Naive thymus-derived CD4-positive, alpha-beta T cell (primary cell): ENCODE measurements at regions of chr11 and their contacts with region 1.

Region 1: GRCh38 chr11:18634140-18635032 is at the start of gene SPTY2D1:
- DNase-seq: peak; percentile 88 to 99 (median 98)
- ATAC-seq: peak; percentile 97
- H3K4me3 ChIP-seq: peak within 1 kb of the TSS; percentile 98
- H3K4me3 Mint-ChIP-seq: peak within 1 kb of the TSS; percentile 83 to 99 (median 96)
- H3K27ac ChIP-seq: peak within 1 kb of the TSS; percentile 98
- H3K27ac Mint-ChIP-seq: peak within 1 kb of the TSS; percentile 95 to 100 (median 98)
- H3K4me1 ChIP-seq: peaks cover 10 to 17% of the 10 kb centered on the region in 2 donors
- H3K4me1 Mint-ChIP-seq: peaks cover 6 to 58% (median 32%) of the 10 kb centered on the region in 7 donors
- H3K27me3 ChIP-seq: no peaks in the 10 kb centered on the region
- H3K27me3 Mint-ChIP-seq: peaks cover 0 to 7% (median 0%) of the 10 kb centered on the region in 5 donors
- total RNA-seq, gene SPTY2D1: 26.0 to 37.4 (median 28.2) TPM

Region 2: GRCh38 chr11:17185938-17186337 is 1448.4 kb before region 1 on chr11:
- CTCF ChIA-PET with region 1: no interaction called
- POLR2A ChIA-PET with region 1: no interaction called
- intact Hi-C with region 1: no loop called
- DNase-seq: no peak
- ATAC-seq: no peak
- H3K4me3 ChIP-seq: no peak overlapping the region
- H3K4me3 Mint-ChIP-seq: no peak overlapping the region
- H3K27ac ChIP-seq: no peak overlapping the region
- H3K27ac Mint-ChIP-seq: no peak overlapping the region
- H3K4me1 ChIP-seq: no peaks in the 10 kb centered on the region
- H3K4me1 Mint-ChIP-seq: peaks cover 2 to 30% (median 19%) of the 10 kb centered on the region in 7 donors
- H3K27me3 ChIP-seq: no peaks in the 10 kb centered on the region
- H3K27me3 Mint-ChIP-seq: no peaks in the 10 kb centered on the region

Region 3: GRCh38 chr11:18105802-18106574 is 528.4 kb before region 1 on chr11 and contains the start of gene SAAL1:
- CTCF ChIA-PET with region 1: no interaction called
- POLR2A ChIA-PET with region 1: no interaction called
- intact Hi-C with region 1: loop called (anchors 1 to 2 kb)
- DNase-seq: peak; percentile 80 to 95 (median 84)
- ATAC-seq: peak; percentile 99
- H3K4me3 ChIP-seq: peak within 1 kb of the TSS; percentile 93
- H3K4me3 Mint-ChIP-seq: peak within 1 kb of the TSS; percentile 84 to 95 (median 93)
- H3K27ac ChIP-seq: peak within 1 kb of the TSS; percentile 78
- H3K27ac Mint-ChIP-seq: peak within 1 kb of the TSS; percentile 77 to 93 (median 90)
- H3K4me1 ChIP-seq: peaks cover 14 to 15% of the 10 kb centered on the region in 2 donors
- H3K4me1 Mint-ChIP-seq: peaks cover 21 to 54% (median 42%) of the 10 kb centered on the region in 7 donors
- H3K27me3 ChIP-seq: no peaks in the 10 kb centered on the region
- H3K27me3 Mint-ChIP-seq: peaks cover 0 to 15% (median 0%) of the 10 kb centered on the region in 5 donors
- total RNA-seq, gene SAAL1: 16.0 to 25.3 (median 19.3) TPM

Region 4: GRCh38 chr11:18427240-18427639 is 207.1 kb before region 1 on chr11:
- CTCF ChIA-PET with region 1: no interaction called
- POLR2A ChIA-PET with region 1: no interaction called
- intact Hi-C with region 1: no loop called
- DNase-seq: no peak
- ATAC-seq: no peak
- H3K4me3 ChIP-seq: no peak overlapping the region
- H3K4me3 Mint-ChIP-seq: no peak overlapping the region
- H3K27ac ChIP-seq: no peak overlapping the region
- H3K27ac Mint-ChIP-seq: no peak overlapping the region
- H3K4me1 ChIP-seq: no peaks in the 10 kb centered on the region
- H3K4me1 Mint-ChIP-seq: peaks cover 3 to 7% (median 5%) of the 10 kb centered on the region in 7 donors
- H3K27me3 ChIP-seq: no peaks in the 10 kb centered on the region
- H3K27me3 Mint-ChIP-seq: peaks cover 0 to 2% (median 0%) of the 10 kb centered on the region in 5 donors

Region 5: GRCh38 chr11:18526521-18527296 is 107.7 kb before region 1 on chr11 and contains the start of gene TSG101:
- CTCF ChIA-PET with region 1: no interaction called
- POLR2A ChIA-PET with region 1: interaction called, 24 read pairs
- intact Hi-C with region 1: loop called (anchors 1 kb)
- DNase-seq: peak; percentile 86 to 96 (median 91)
- ATAC-seq: peak; percentile 91
- H3K4me3 ChIP-seq: peak within 1 kb of the TSS; percentile 94
- H3K4me3 Mint-ChIP-seq: peak within 1 kb of the TSS; percentile 93 to 100 (median 100)
- H3K27ac ChIP-seq: peak within 1 kb of the TSS; percentile 96
- H3K27ac Mint-ChIP-seq: peak within 1 kb of the TSS; percentile 99 to 100 (median 100)
- H3K4me1 ChIP-seq: peaks cover 18% of the 10 kb centered on the region in 2 donors
- H3K4me1 Mint-ChIP-seq: peaks cover 28 to 67% (median 55%) of the 10 kb centered on the region in 7 donors
- H3K27me3 ChIP-seq: no peaks in the 10 kb centered on the region
- H3K27me3 Mint-ChIP-seq: peaks cover 0 to 3% (median 0%) of the 10 kb centered on the region in 5 donors
- total RNA-seq, gene TSG101: 16.8 to 46.3 (median 36.3) TPM

Region 6: GRCh38 chr11:18615628-18616392 is 18.6 kb before region 1 on chr11:
- CTCF ChIA-PET with region 1: interaction called, 3 read pairs
- POLR2A ChIA-PET with region 1: interaction called, 16 read pairs
- intact Hi-C with region 1: loop called (anchors 1 kb)
- DNase-seq: no peak
- ATAC-seq: peak; percentile 44
- H3K4me3 ChIP-seq: no peak overlapping the region
- H3K4me3 Mint-ChIP-seq: peak overlapping the region in 1 of 10 donors; percentile 71
- H3K27ac ChIP-seq: no peak overlapping the region
- H3K27ac Mint-ChIP-seq: peak overlapping the region in 3 of 9 donors; percentile 26 to 72 (median 28)
- H3K4me1 ChIP-seq: peaks cover 21 to 29% of the 10 kb centered on the region in 2 donors
- H3K4me1 Mint-ChIP-seq: peaks cover 26 to 59% (median 47%) of the 10 kb centered on the region in 7 donors
- H3K27me3 ChIP-seq: no peaks in the 10 kb centered on the region
- H3K27me3 Mint-ChIP-seq: no peaks in the 10 kb centered on the region

Region 7: DNA sequence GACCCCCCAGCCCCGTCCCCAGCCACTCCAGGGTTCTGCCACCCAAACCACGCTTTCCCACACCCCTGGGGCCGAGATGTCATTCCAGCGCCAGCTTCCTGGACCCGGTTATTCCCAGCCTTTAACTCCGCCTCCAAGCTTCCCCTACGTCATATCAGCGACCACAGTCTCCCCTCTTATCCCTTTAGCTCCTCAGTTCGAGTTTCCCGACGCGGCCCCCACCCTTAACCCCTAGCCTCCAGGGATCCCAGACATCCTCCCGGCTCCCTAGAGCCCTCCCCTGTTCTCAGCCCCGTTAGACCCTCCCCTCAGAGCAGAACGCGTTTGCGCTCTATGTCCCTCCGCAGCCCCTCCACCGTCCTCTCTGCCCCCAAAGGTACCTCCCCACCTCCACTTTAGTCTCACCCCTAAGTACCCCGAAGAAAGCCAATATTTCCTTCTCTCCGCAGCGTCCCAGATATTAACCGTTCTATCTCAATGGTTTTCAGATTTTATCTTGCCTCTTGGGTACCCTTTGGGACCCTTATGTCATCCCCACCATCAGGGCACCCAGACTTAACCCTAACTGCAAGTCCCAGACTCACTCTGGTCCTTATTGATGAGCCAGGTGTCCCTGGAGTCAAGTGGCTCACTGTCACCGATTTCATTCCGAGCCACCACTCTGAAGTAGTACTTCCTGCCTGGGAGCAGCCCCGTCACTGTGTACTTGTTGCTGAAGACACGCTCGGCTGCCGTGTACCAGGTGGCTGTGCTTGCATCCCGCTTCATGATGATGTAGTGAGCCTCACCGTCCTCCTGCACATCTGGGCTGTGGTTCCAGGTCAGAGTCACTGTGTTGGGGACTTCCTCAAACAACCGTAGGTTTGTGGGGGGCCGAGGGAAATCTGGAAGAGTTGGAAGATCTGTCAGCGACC is 72.2 kb after region 1 on chr11:
- CTCF ChIA-PET with region 1: no interaction called
- POLR2A ChIA-PET with region 1: interaction called, 8 read pairs
- intact Hi-C with region 1: loop called in 1 of 2 experiments (anchors 1 kb)
- DNase-seq: peak in 8 of 9 donors; percentile 34 to 73 (median 64)
- ATAC-seq: peak; percentile 83
- H3K4me3 ChIP-seq: peak overlapping the region; percentile 88
- H3K4me3 Mint-ChIP-seq: peak overlapping the region; percentile 90 to 98 (median 93)
- H3K27ac ChIP-seq: peak overlapping the region; percentile 68
- H3K27ac Mint-ChIP-seq: peak overlapping the region; percentile 81 to 98 (median 90)
- H3K4me1 ChIP-seq: peaks cover 9 to 10% of the 10 kb centered on the region in 2 donors
- H3K4me1 Mint-ChIP-seq: peaks cover 15 to 29% (median 25%) of the 10 kb centered on the region in 7 donors
- H3K27me3 ChIP-seq: no peaks in the 10 kb centered on the region
- H3K27me3 Mint-ChIP-seq: peaks cover 0 to 55% (median 0%) of the 10 kb centered on the region in 5 donors

Region 8: GRCh38 chr11:19060629-19061028 is 426.2 kb after region 1 on chr11 and contains the start of gene MRGPRX2:
- CTCF ChIA-PET with region 1: no interaction called
- POLR2A ChIA-PET with region 1: no interaction called
- intact Hi-C with region 1: no loop called
- DNase-seq: no peak
- ATAC-seq: peak; percentile 61
- H3K4me3 ChIP-seq: no peak within 1 kb of the TSS
- H3K4me3 Mint-ChIP-seq: peak within 1 kb of the TSS in 2 of 10 donors; percentile 5 to 50
- H3K27ac ChIP-seq: no peak within 1 kb of the TSS
- H3K27ac Mint-ChIP-seq: peak within 1 kb of the TSS in 2 of 9 donors; percentile 9 to 62
- H3K4me1 ChIP-seq: peaks cover 5 to 18% of the 10 kb centered on the region in 2 donors
- H3K4me1 Mint-ChIP-seq: peaks cover 0 to 29% (median 15%) of the 10 kb centered on the region in 7 donors
- H3K27me3 ChIP-seq: no peaks in the 10 kb centered on the region
- H3K27me3 Mint-ChIP-seq: peaks cover 0 to 22% (median 10%) of the 10 kb centered on the region in 5 donors
- total RNA-seq, gene MRGPRX2: 0.17 TPM in 1 of 5 experiments, not detected in the others

Region 9: DNA sequence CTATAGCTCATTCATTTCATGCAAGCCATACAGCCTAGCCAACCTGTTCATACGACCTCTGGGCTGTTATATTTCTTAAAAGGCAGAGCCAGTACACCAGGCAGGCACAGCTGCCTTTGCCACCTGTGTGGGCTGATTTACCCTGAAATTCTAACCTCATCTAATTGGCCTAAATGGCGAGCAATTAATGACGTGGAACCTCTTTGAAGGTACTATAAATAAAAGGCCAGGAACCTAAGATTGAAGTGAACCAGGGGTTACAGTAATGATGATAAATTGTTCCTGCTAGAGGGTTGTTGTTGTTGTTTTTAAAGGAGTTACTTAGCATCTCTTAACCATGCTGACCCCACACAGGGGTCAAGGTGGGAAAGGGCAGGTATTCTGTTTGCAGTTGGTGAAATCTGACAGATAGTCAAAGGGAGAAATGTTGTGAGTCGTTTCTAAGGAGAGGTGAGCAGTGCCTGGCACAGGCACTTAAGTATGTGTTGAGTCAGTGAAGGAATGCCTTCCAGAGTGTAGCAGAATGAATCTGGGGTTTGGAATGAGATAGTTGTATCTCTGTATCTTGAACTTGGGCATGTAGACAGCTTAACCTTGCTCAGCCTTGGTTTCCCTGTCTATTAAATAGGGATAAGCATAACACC is 864.8 kb after region 1 on chr11:
- CTCF ChIA-PET with region 1: no interaction called
- POLR2A ChIA-PET with region 1: no interaction called
- intact Hi-C with region 1: no loop called
- DNase-seq: no peak
- ATAC-seq: no peak
- H3K4me3 ChIP-seq: no peak overlapping the region
- H3K4me3 Mint-ChIP-seq: no peak overlapping the region
- H3K27ac ChIP-seq: no peak overlapping the region
- H3K27ac Mint-ChIP-seq: no peak overlapping the region
- H3K4me1 ChIP-seq: no peaks in the 10 kb centered on the region
- H3K4me1 Mint-ChIP-seq: no peaks in the 10 kb centered on the region
- H3K27me3 ChIP-seq: no peaks in the 10 kb centered on the region
- H3K27me3 Mint-ChIP-seq: peaks cover 0 to 26% (median 8%) of the 10 kb centered on the region in 5 donors

Region 10: DNA sequence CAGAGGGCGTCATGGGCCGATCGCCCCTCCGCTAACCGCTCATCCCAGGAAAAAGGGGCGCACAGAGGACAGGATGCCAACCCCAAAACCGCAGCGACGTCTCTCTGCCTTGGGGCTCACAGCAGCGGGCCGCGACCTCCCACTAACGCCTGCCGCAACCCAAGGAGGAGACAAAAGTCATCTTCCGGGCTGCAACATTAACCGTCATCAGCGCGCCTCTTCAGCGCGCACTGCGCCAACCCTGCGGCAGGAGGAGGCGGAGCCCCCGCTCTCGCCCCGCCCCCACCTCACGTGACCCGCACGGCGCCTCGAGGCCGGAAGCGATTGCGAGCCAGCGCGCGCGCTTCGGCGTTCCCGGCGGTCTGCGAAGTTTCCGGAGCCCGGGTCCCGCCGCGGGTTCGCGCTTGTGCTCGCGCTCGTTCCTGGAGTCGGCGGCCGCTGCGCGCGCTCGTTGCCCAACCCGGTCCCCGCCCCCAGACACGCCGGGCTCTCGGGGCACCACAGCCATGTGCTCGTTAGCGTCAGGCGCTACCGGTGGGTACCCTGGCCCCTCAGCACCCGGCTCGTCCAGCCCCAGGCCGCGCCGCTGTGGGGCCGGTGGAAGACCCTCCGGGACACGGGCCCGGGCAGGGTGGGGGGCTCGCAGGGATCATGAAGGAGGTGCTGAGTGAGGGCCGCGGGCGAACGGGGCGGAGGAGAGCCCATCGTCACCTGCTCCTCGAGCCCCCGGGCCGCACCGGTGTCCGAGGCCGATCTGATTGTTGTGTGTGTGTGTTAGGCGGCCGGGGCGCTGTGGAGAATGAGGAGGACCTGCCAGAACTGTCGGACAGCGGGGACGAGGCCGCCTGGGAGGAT is 1753.1 kb after region 1 on chr11 and contains the start of gene PRMT3:
- CTCF ChIA-PET with region 1: no interaction called
- POLR2A ChIA-PET with region 1: no interaction called
- intact Hi-C with region 1: loop called in 1 of 2 experiments (anchors 10 kb)
- DNase-seq: peak; percentile 96 to 99 (median 98)
- ATAC-seq: peak; percentile 95
- H3K4me3 ChIP-seq: peak within 1 kb of the TSS; percentile 65
- H3K4me3 Mint-ChIP-seq: peak within 1 kb of the TSS; percentile 96 to 100 (median 98)
- H3K27ac ChIP-seq: peak within 1 kb of the TSS; percentile 87
- H3K27ac Mint-ChIP-seq: peak within 1 kb of the TSS; percentile 96 to 100 (median 100)
- H3K4me1 ChIP-seq: peaks cover 14% of the 10 kb centered on the region in 2 donors
- H3K4me1 Mint-ChIP-seq: peaks cover 9 to 37% (median 26%) of the 10 kb centered on the region in 7 donors
- H3K27me3 ChIP-seq: no peaks in the 10 kb centered on the region
- H3K27me3 Mint-ChIP-seq: no peaks in the 10 kb centered on the region
- total RNA-seq, gene PRMT3: 12.5 to 19.0 (median 17.7) TPM